Posterior vena cava (tissue), 2 donors: ENCODE measurements at regions of chr5 and their contacts with region 1.

Region 1: DNA sequence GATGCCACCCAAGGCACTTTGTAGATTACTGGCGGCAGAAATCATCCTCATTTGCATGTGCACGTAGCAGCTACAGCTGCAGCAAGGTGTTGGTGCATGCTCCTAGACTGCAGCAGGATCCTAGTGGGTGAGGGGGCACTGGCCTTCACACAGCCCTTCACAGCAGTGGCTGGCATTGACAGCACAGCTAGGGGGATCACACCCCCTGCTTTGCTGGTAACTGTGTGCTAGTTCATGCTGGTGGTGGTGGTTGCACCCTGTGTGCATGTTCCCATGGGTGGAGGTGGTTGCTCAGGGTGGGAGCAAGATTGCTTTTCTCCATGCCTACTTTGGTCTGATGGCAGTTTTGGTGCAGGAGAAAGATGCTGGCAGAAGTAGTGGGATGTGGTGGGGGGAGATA is 1695.1 kb upstream of the CDH6 start:
- DNase-seq: no peak

Region 2: GRCh38 chr5:29485333-29485732 is 13.1 kb before region 1 on chr5:
- intact Hi-C with region 1: loop called in 1 of 2 experiments (anchors 1 kb)
- DNase-seq: no peak

Region 3: DNA sequence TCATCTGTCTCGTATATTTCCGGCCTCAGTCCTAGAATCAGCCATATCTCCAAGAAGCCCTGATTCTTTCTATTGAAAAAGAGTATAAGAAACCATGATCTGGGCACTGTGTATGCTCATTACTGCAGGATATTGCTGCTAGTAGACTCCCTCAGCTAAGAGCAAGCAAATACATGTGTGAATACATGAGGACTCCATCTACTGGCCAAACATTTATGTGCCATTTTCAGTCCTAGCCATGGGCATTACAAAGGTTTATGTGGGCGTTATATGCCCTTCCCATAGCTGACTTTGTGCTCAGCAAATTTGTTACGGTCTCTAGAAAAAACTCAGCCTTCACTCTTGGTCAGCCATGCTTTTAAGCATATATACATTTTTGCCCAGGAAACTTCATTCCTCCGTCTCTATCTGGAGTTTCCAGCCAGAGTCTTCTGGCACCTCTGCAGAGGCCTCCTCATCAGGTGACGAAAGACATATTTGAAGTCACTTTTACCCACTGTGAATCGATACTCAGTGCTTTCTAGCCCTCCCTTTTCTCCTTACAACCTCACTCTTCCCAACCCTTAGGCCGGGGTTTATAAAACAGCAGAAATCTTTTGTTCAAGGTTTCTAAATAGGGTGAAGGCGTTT is 199.5 kb after region 1 on chr5:
- intact Hi-C with region 1: no loop called
- DNase-seq: no peak